ENCODE measurements at regions of chr1 and their contacts with region 1.

Region 1: DNA sequence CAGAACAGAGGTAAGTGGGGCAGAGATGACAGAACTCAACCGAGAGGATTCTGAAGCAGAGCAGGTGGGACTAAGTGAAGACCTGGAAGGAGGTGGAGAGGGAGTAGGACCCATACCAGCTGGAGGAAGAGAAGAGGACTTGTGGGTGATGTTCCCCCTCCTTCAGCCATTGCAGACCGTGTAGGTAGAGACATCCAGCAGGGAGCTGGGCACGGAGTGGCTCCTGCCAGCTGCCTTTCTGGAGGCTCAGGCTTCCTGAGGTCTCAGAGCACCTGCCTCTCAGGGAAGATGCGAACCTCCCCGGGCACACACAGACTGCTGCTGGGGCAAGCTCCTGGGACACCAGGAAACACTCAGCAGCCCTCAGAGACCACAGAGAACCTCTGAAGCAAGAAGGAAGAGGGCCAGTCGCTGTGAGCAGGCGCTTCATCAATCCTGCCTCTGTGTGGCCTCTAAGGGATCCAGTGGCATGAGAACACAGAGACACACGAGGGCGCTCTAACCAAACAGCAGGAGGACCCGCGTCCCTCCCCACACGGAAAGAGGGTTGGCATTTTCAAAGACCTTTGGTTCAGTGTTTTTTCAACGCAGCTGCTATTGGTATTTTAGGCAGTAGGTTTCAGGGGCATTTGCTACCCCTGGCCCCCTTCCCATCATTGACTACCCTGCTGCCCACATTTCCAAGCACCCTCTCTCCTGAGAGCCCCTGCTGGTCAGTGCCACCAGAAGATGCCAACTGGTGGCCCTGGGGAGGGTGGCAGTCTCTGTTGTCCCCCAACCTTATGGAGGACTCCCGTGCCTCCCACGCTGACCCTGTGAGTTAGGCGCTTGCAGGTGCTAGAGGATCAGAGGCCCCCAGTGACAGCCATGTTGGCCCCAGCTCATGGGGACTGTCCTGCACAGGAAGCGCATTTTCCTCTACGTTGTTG is 89.6 kb upstream of the EDN2 start:
- DNase-seq: peak; percentile 57
- H3K4me3 ChIP-seq: no peak overlapping the region
- H3K27ac ChIP-seq: no peak overlapping the region
- H3K4me1 ChIP-seq: no peaks in the 10 kb centered on the region
- H3K27me3 ChIP-seq: no peaks in the 10 kb centered on the region
- CTCF ChIP-seq: peak; percentile 91 to 98

Region 2: GRCh38 chr1:41353726-41354125 is 220.3 kb before region 1 on chr1:
- CTCF ChIA-PET with region 1: no interaction called
- dilution Hi-C with region 1: no loop called
- in situ Hi-C with region 1: no loop called
- intact Hi-C with region 1: no loop called
- DNase-seq: peak; percentile 74
- H3K4me3 ChIP-seq: no peak overlapping the region
- H3K27ac ChIP-seq: no peak overlapping the region
- H3K4me1 ChIP-seq: peaks cover 24% of the 10 kb centered on the region
- H3K27me3 ChIP-seq: no peaks in the 10 kb centered on the region
- CTCF ChIP-seq: no peak

Region 3: DNA sequence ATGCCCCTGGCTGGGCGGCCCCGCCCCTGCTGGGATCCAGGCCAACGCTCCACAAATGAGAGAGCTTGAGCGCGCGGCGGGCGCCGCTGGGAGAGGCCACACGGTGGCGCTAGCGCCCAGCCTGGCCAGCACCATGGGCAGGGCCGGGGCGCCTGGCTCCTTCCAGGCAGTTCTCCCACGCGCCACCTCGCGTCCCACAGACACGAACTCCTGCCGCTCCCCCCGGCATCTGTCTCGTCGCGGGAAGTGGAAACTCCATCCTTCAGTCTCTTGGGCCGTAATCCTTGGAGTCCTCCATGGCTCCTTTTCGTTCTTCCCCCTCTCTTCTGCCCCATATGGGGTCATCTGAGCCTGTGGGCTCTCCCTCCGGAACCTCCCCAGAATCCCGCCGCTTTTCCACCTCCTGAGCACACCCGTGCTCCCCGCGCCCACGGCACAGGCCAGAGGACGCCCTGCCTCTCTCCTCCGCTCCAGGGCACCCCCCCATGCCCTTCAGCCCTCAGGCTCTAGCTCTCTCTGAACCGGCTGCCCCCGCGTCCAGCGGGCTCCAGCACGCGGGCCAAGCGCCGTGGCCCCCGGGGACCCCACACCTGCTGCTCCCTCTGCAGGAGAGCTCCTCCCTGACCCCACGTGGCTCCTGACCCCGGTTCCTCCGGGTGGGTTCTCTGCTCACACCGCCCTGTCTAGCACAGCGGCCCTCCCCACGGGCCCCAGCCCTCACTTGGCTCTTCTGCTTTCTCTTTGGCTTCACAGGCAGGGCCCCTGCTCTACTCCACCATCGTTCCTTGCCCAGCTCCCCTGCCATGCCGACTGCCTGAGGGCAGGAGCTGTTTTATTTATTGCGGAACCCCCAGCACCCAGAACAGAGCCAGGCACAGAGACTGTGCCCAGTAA is 57.6 kb before region 1 on chr1:
- CTCF ChIA-PET with region 1: no interaction called
- dilution Hi-C with region 1: no loop called
- in situ Hi-C with region 1: no loop called
- intact Hi-C with region 1: loop called (anchors 1 kb)
- DNase-seq: peak; percentile 71
- H3K4me3 ChIP-seq: peak overlapping the region in 2 of 3 experiments; percentile 18 to 38
- H3K27ac ChIP-seq: no peak overlapping the region
- H3K4me1 ChIP-seq: peaks cover 23% of the 10 kb centered on the region
- H3K27me3 ChIP-seq: no peaks in the 10 kb centered on the region
- CTCF ChIP-seq: peak; percentile 69 to 91

Region 4: GRCh38 chr1:41726899-41727748 is 153.1 kb after region 1 on chr1:
- CTCF ChIA-PET with region 1: no interaction called
- dilution Hi-C with region 1: no loop called
- in situ Hi-C with region 1: no loop called
- intact Hi-C with region 1: no loop called
- DNase-seq: no peak
- H3K4me3 ChIP-seq: no peak overlapping the region
- H3K27ac ChIP-seq: no peak overlapping the region
- H3K4me1 ChIP-seq: no peaks in the 10 kb centered on the region
- H3K27me3 ChIP-seq: no peaks in the 10 kb centered on the region
- CTCF ChIP-seq: no peak

Region 5: GRCh38 chr1:41766546-41766945 is 192.5 kb after region 1 on chr1:
- CTCF ChIA-PET with region 1: interaction called, 7 read pairs
- dilution Hi-C with region 1: no loop called
- in situ Hi-C with region 1: no loop called
- intact Hi-C with region 1: loop called (anchors 1 kb)
- DNase-seq: no peak
- H3K4me3 ChIP-seq: no peak overlapping the region
- H3K27ac ChIP-seq: no peak overlapping the region
- H3K4me1 ChIP-seq: peaks cover 20% of the 10 kb centered on the region
- H3K27me3 ChIP-seq: no peaks in the 10 kb centered on the region
- CTCF ChIP-seq: no peak

Region 6: GRCh38 chr1:41891199-41891896 is 317.3 kb after region 1 on chr1:
- CTCF ChIA-PET with region 1: no interaction called
- dilution Hi-C with region 1: no loop called
- in situ Hi-C with region 1: no loop called
- intact Hi-C with region 1: loop called (anchors 10 kb)
- DNase-seq: peak; percentile 55
- H3K4me3 ChIP-seq: peak overlapping the region; percentile 0 to 30 (median 17)
- H3K27ac ChIP-seq: peak overlapping the region; percentile 64
- H3K4me1 ChIP-seq: peaks cover 33% of the 10 kb centered on the region
- H3K27me3 ChIP-seq: no peaks in the 10 kb centered on the region
- CTCF ChIP-seq: peak in 1 of 2 donors; percentile 18

Region 7: GRCh38 chr1:42035830-42036604 is 462.0 kb after region 1 on chr1:
- CTCF ChIA-PET with region 1: no interaction called
- dilution Hi-C with region 1: no loop called
- in situ Hi-C with region 1: no loop called
- intact Hi-C with region 1: loop called (anchors 1 kb)
- DNase-seq: peak; percentile 87
- H3K4me3 ChIP-seq: peak overlapping the region; percentile 77 to 93 (median 86)
- H3K27ac ChIP-seq: peak overlapping the region; percentile 57
- H3K4me1 ChIP-seq: peaks cover 19% of the 10 kb centered on the region
- H3K27me3 ChIP-seq: no peaks in the 10 kb centered on the region
- CTCF ChIP-seq: no peak

Region 8: DNA sequence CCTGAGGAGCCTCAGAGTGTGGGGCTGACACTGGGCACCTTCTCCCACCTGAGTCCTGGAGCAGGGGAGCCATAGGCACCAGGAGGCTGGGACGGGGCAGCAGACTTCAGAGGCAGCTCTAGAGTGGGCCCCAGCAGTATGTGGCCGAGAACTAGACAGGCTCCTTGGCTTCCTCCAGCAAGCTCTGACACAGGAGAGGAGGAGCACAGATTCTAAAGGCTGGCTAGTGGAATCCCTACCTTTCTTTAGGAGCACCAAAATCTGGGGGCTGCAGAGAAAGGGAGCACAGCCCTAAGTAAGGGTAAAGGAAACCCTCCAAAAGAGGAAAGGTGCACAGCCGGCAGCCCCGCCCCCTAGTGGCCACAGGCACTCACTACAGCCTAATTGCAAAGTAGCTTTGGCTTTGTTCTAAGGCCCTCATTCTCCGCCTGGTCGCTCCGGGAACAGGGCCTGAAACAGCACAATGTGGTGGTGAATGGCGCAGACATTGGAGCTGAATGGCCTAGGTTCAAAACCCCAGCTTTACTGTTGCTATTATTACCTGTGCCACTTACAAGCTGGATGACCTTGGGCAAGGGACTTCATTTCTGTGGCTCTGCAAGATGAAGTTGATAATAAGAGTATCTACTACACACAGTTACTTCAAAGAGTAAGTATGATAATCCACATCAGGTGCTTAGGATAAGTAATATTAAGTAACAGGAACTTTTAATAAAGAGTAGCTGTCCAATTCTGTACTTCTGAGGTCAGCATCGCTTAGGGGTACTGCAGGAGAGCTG is 599.3 kb after region 1 on chr1:
- CTCF ChIA-PET with region 1: no interaction called
- dilution Hi-C with region 1: no loop called
- in situ Hi-C with region 1: no loop called
- intact Hi-C with region 1: loop called (anchors 2 kb)
- DNase-seq: peak; percentile 35
- H3K4me3 ChIP-seq: peak overlapping the region in 2 of 3 experiments; percentile 0 to 7
- H3K27ac ChIP-seq: peak overlapping the region; percentile 66
- H3K4me1 ChIP-seq: peaks cover 56% of the 10 kb centered on the region
- H3K27me3 ChIP-seq: no peaks in the 10 kb centered on the region
- CTCF ChIP-seq: peak; percentile 96 to 99

Measured in mammary epithelial cell (primary cell).